H1 (cell line): ENCODE measurements at regions of chr3 and their contacts with region 1.

Region 1: GRCh38 chr3:52385157-52385556 is 59.7 kb downstream of the SEMA3G start:
- DNase-seq: peak; percentile 81 to 85
- H3K4me3 ChIP-seq: no peak overlapping the region
- H3K27ac ChIP-seq: no peak overlapping the region
- H3K4me1 ChIP-seq: peaks cover 0 to 3% (median under 1%) of the 10 kb centered on the region in 4 experiments; a peak in 3 of 7 replicates
- H3K27me3 ChIP-seq: no peaks in the 10 kb centered on the region
- CTCF ChIP-seq: peak in 2 of 3 experiments; percentile 99 to 100; a peak in 3 of 4 replicates
- EP300 ChIP-seq: no peak
- POLR2A ChIP-seq: no peak
- RAD21 ChIP-seq: peak; percentile 78 to 88

Region 2: GRCh38 chr3:52231502-52232293 is 153.5 kb before region 1 on chr3:
- CTCF ChIA-PET with region 1: interaction called, 67 read pairs
- POLR2A ChIA-PET with region 1: no interaction called
- DNase-seq: peak in 1 of 2 experiments; percentile 97
- H3K4me3 ChIP-seq: no peak overlapping the region
- H3K27ac ChIP-seq: no peak overlapping the region
- H3K4me1 ChIP-seq: peaks cover 0 to 11% (median 5%) of the 10 kb centered on the region in 4 experiments; a peak in 5 of 7 replicates
- H3K27me3 ChIP-seq: no peaks in the 10 kb centered on the region
- CTCF ChIP-seq: peak in 2 of 3 experiments; percentile 84 to 98; a peak in 3 of 4 replicates
- EP300 ChIP-seq: no peak
- POLR2A ChIP-seq: no peak
- RAD21 ChIP-seq: peak; percentile 79 to 81

Region 3: DNA sequence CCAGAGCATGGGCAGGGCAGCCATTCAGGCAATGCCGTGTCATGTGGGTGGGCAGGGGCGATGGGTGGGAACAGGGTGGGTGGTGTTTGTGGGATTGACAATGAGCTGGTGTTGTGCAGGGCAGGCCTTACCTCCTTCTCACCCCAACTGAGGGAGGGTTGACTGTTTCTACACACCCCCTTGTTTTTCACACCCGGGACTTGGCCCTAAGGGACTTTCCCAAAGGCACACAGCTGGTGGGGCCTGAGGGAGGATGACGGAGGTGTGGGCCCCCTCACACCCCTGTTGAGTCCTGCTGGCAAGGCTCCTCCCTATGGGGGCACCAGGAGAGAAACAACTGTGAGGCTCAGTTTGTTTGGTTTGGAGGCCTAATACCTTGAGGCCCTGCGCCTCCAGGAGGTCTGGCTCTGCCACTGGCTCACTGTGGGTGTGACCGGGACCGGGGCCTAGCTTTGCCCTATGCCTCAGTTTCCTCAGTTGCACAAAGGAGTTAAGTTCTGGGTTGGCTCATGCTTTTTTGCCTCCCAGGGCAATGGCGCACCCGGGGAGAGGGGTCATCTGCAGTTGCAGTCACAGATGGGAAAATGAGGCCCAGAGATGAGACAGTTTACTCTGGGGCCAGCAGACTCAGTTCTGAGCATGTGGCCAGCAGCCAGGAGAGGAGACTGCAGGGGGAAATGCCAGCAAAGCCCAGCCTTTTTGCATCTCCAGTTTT is 74.1 kb before region 1 on chr3:
- CTCF ChIA-PET with region 1: interaction called, 14 read pairs
- POLR2A ChIA-PET with region 1: no interaction called
- DNase-seq: no peak
- H3K4me3 ChIP-seq: no peak overlapping the region
- H3K27ac ChIP-seq: no peak overlapping the region
- H3K4me1 ChIP-seq: no peaks in the 10 kb centered on the region; a peak in 1 of 7 replicates
- H3K27me3 ChIP-seq: peaks cover 0 to 3% (median 0%) of the 10 kb centered on the region in 4 experiments; a peak in 1 of 7 replicates
- CTCF ChIP-seq: no peak
- EP300 ChIP-seq: no peak
- POLR2A ChIP-seq: no peak
- RAD21 ChIP-seq: no peak

Region 4: DNA sequence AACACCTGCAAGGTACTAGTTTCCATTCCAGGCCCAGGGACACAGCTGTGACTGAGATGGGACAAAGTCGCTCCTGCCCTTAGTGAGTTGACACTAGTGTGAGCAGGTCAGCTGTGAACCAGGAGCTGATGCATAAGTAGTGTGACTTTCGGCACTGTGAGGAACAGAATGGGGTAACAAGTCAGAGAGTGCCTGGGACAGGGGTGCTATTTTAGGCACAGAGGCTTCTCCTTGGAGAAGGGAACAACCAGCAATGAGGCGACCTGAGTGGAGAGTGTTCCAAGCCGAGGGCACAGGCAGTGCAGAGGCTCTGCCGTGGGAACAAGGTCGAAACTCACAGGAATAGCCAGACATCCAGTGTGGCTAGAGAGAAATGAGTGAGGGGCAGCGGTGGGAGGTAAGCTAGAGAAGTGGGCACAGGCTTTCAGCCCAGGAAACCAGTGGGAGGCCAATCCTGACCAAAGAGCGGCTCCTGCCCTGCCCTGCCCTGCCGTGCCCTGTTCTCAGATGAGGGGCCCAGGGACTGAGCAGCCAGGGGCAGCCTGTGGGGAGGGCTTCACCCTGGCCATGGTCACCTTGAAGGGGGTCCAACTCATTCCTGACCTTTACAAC is 54.9 kb before region 1 on chr3:
- CTCF ChIA-PET with region 1: interaction called, 165 read pairs
- POLR2A ChIA-PET with region 1: no interaction called
- DNase-seq: no peak
- H3K4me3 ChIP-seq: no peak overlapping the region
- H3K27ac ChIP-seq: no peak overlapping the region
- H3K4me1 ChIP-seq: no peaks in the 10 kb centered on the region
- H3K27me3 ChIP-seq: no peaks in the 10 kb centered on the region; a peak in 1 of 7 replicates
- CTCF ChIP-seq: no peak
- EP300 ChIP-seq: no peak
- POLR2A ChIP-seq: no peak
- RAD21 ChIP-seq: no peak

Region 5: DNA sequence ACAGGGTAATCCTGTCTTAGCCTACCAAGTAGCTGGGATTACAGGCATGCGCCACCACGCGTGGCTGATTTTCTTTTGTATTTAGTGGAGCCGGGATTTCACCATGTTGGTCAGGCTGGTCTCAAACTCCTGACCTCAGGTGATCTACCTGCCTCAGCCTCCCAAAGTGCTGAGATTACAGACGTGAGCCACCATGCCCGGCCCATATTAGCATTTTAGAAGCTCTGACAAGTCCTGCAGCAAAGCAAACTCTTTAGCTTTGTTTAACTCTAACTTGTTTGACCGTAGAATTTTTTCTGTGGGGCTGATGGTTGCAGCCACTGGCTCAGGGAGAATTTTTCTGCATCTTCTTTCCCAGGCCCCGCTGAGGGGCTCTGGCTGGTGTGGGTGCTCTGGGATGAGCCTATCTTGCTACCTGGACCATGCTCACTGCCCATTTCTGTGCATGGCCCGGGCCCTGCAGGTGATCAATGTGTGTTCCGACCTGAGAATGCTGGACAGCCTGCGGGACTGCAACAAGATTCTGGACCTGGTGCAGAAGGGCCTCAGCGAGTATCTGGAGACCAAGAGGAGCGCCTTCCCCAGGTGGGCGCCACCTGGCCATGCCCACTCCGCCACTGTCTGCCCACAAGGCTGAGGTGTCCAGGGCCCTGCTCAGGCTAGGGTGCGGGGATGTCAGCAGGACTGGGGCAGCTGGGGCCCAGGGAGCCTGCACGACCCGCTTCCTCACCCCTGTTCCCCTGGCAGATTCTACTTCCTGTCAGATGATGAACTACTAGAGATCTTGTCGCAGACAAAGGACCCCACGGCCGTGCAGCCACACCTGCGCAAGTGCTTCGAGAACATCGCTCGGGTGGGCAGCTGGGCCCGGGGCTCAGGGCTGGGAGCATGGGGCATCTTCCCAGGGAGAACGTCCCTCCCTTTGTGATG is 27.7 kb before region 1 on chr3:
- CTCF ChIA-PET with region 1: interaction called, 131 read pairs
- POLR2A ChIA-PET with region 1: no interaction called
- DNase-seq: no peak
- H3K4me3 ChIP-seq: no peak overlapping the region
- H3K27ac ChIP-seq: no peak overlapping the region
- H3K4me1 ChIP-seq: no peaks in the 10 kb centered on the region; a peak in 1 of 7 replicates
- H3K27me3 ChIP-seq: no peaks in the 10 kb centered on the region
- CTCF ChIP-seq: no peak
- EP300 ChIP-seq: no peak
- POLR2A ChIP-seq: no peak
- RAD21 ChIP-seq: no peak

Region 6: GRCh38 chr3:52406231-52406661 is 21.1 kb after region 1 on chr3:
- CTCF ChIA-PET with region 1: interaction called, 150 read pairs
- POLR2A ChIA-PET with region 1: interaction called, 5 read pairs
- DNase-seq: no peak
- H3K4me3 ChIP-seq: no peak overlapping the region
- H3K27ac ChIP-seq: no peak overlapping the region
- H3K4me1 ChIP-seq: peaks cover 0 to 10% (median 1%) of the 10 kb centered on the region in 4 experiments; a peak in 5 of 7 replicates
- H3K27me3 ChIP-seq: no peaks in the 10 kb centered on the region
- CTCF ChIP-seq: no peak
- EP300 ChIP-seq: no peak
- POLR2A ChIP-seq: no peak
- RAD21 ChIP-seq: no peak

Region 7: DNA sequence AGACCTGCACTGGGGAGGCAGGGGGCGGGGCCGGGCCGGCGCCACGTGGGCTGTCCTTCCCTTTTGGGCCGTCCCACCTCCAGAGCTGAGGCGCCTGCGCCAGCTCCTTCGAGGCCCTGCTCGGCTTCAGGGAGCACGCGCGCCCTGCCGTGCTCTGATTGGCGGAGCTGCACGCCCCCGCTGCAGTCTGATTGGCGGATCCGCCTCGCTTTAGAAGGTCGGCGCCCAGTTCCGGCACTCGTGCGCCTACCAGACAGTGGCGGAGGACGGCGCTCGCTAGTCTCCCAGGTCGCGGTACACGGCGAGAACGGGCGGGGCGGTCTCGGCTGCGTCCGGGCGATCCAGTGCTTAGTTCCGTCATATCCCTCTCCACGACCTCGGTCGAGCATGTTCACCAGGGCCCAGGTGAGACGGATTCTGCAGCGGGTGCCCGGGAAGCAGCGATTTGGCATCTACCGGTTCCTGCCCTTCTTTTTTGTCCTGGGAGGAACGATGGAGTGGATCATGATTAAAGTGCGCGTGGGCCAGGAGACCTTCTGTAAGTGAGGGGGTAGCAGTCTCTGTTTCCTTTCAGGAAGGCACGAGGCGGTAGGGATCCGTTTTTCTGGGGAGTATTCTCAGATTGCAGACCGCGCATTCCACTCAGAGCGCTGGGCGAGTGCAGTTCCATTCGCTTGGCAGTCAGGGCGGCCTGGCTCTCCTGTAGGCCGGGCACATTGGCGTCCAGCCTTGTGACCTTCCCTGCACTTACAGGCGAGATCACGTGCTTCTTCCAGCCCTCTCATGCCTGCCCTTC is 151.4 kb after region 1 on chr3 and contains the start of gene UQCC5:
- CTCF ChIA-PET with region 1: no interaction called
- POLR2A ChIA-PET with region 1: no interaction called
- DNase-seq: peak; percentile 94 to 96
- H3K4me3 ChIP-seq: peak within 1 kb of the TSS; percentile 81 to 91 (median 88)
- H3K27ac ChIP-seq: peak within 1 kb of the TSS; percentile 77
- H3K4me1 ChIP-seq: peaks cover 7 to 33% (median 19%) of the 10 kb centered on the region in 4 experiments
- H3K27me3 ChIP-seq: no peaks in the 10 kb centered on the region
- CTCF ChIP-seq: no peak
- EP300 ChIP-seq: no peak
- POLR2A ChIP-seq: peak in 1 of 2 experiments; percentile 97; a peak in 2 of 3 replicates
- RAD21 ChIP-seq: peak in 1 of 2 experiments; percentile 11; a peak in 1 of 4 replicates
- total RNA-seq, gene UQCC5: 37.7 and 39.3 TPM in 2 replicates